ENCODE measurements at regions of chr2 and their contacts with region 1.

Region 1: GRCh38 chr2:9813312-9814133 is 29.8 kb upstream of the TAF1B start:
- DNase-seq: peak; percentile 77
- ATAC-seq: peak; percentile 65
- H3K4me3 ChIP-seq: no peak overlapping the region
- H3K4me3 Mint-ChIP-seq: no peak overlapping the region
- H3K27ac ChIP-seq: no peak overlapping the region
- H3K27ac Mint-ChIP-seq: no peak overlapping the region
- H3K4me1 ChIP-seq: peaks cover 6 to 10% of the 10 kb centered on the region in 2 donors
- H3K4me1 Mint-ChIP-seq: peaks cover 7% of the 10 kb centered on the region
- H3K27me3 ChIP-seq: peaks cover 0 to 10% (median 5%) of the 10 kb centered on the region in 4 experiments
- H3K27me3 Mint-ChIP-seq: peaks cover 13% of the 10 kb centered on the region
- CTCF ChIP-seq: peak; percentile 96

Region 2: GRCh38 chr2:9799665-9800632 is 13.6 kb before region 1 on chr2:
- CTCF ChIA-PET with region 1: interaction called, 18 read pairs
- POLR2A ChIA-PET with region 1: no interaction called
- intact Hi-C with region 1: no loop called
- DNase-seq: peak; percentile 85
- ATAC-seq: peak; percentile 94
- H3K4me3 ChIP-seq: peak overlapping the region in 3 of 5 experiments; percentile 5 to 49 (median 21)
- H3K4me3 Mint-ChIP-seq: peak overlapping the region; percentile 59
- H3K27ac ChIP-seq: no peak overlapping the region
- H3K27ac Mint-ChIP-seq: peak overlapping the region; percentile 66
- H3K4me1 ChIP-seq: peaks cover 13 to 20% of the 10 kb centered on the region in 2 donors
- H3K4me1 Mint-ChIP-seq: peaks cover 23% of the 10 kb centered on the region
- H3K27me3 ChIP-seq: peaks cover 0 to 4% (median 2%) of the 10 kb centered on the region in 4 experiments
- H3K27me3 Mint-ChIP-seq: peaks cover 7% of the 10 kb centered on the region
- CTCF ChIP-seq: peak; percentile 96

Region 3: GRCh38 chr2:10668402-10669012 is 855.0 kb after region 1 on chr2:
- CTCF ChIA-PET with region 1: no interaction called
- POLR2A ChIA-PET with region 1: no interaction called
- intact Hi-C with region 1: loop called (anchors 5 kb)
- DNase-seq: peak; percentile 77
- ATAC-seq: peak; percentile 56
- H3K4me3 ChIP-seq: no peak overlapping the region
- H3K4me3 Mint-ChIP-seq: no peak overlapping the region
- H3K27ac ChIP-seq: no peak overlapping the region
- H3K27ac Mint-ChIP-seq: no peak overlapping the region
- H3K4me1 ChIP-seq: no peaks in the 10 kb centered on the region
- H3K4me1 Mint-ChIP-seq: no peaks in the 10 kb centered on the region
- H3K27me3 ChIP-seq: no peaks in the 10 kb centered on the region
- H3K27me3 Mint-ChIP-seq: no peaks in the 10 kb centered on the region
- CTCF ChIP-seq: peak; percentile 97

Measured in B cell (primary cell).